ENCODE measurements at regions of chrX and their contacts with region 1.

Region 1: GRCh38 chrX:100368167-100368566 is 41.9 kb downstream of the PCDH19 start:
- DNase-seq: no peak
- H3K4me3 ChIP-seq: no peak overlapping the region
- H3K27ac ChIP-seq: no peak overlapping the region
- H3K4me1 ChIP-seq: peaks cover 0 to 3% (median 0%) of the 10 kb centered on the region in 4 experiments; a peak in 1 of 7 replicates
- H3K27me3 ChIP-seq: no peaks in the 10 kb centered on the region
- CTCF ChIP-seq: peak; percentile 49 to 67 (median 57); a peak in 3 of 4 replicates
- EP300 ChIP-seq: no peak
- POLR2A ChIP-seq: no peak
- RAD21 ChIP-seq: peak; percentile 68 to 78

Region 2: GRCh38 chrX:100379388-100379986 is 11.3 kb after region 1 on chrX:
- CTCF ChIA-PET with region 1: interaction called, 28 read pairs
- POLR2A ChIA-PET with region 1: no interaction called
- DNase-seq: no peak
- H3K4me3 ChIP-seq: no peak overlapping the region
- H3K27ac ChIP-seq: no peak overlapping the region
- H3K4me1 ChIP-seq: peaks cover 0 to 3% (median 0%) of the 10 kb centered on the region in 4 experiments; a peak in 1 of 7 replicates
- H3K27me3 ChIP-seq: no peaks in the 10 kb centered on the region
- CTCF ChIP-seq: peak in 2 of 3 experiments; percentile 45 to 51; a peak in 3 of 4 replicates
- EP300 ChIP-seq: no peak
- POLR2A ChIP-seq: no peak
- RAD21 ChIP-seq: peak; percentile 50 to 58

Measured in H1 (cell line).